ENCODE measurements at regions of chr2 and their contacts with region 1.

Region 1: GRCh38 chr2:167147271-167147941 is 259.1 kb downstream of the XIRP2 start:
- DNase-seq: no peak
- ATAC-seq: no peak
- H3K4me3 ChIP-seq: no peak overlapping the region
- H3K27ac ChIP-seq: peak overlapping the region; percentile 32
- H3K4me1 ChIP-seq: peaks cover 19% of the 10 kb centered on the region
- H3K27me3 ChIP-seq: no peaks in the 10 kb centered on the region
- CTCF ChIP-seq: no peak

Region 2: GRCh38 chr2:166984797-166985196 is 162.6 kb before region 1 on chr2:
- intact Hi-C with region 1: no loop called
- DNase-seq: no peak
- ATAC-seq: no peak
- H3K4me3 ChIP-seq: no peak overlapping the region
- H3K27ac ChIP-seq: no peak overlapping the region
- H3K4me1 ChIP-seq: no peaks in the 10 kb centered on the region
- H3K27me3 ChIP-seq: no peaks in the 10 kb centered on the region
- CTCF ChIP-seq: no peak

Region 3: DNA sequence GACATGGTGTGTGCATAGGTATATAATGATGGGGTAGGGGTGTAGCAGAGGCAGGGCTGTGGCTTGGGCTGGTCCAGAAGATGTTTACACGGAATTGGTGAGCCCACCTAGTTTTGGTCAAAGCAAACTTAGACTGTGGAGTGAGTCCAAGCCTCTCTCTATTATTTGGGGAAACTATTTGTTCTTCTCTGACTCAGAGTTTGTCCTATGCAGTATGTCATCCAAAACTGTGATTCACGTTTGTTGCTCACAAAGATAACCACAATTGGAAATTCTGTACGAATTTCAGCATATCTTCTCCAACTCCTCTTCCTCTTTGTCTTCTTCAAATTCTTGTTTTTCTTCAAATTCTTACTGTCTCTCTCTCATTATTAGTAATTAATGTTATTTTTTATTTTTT is 33.7 kb after region 1 on chr2:
- intact Hi-C with region 1: loop called in 1 of 2 experiments (anchors 5 kb)
- DNase-seq: no peak
- ATAC-seq: peak in 2 of 4 donors; percentile 30 to 35
- H3K4me3 ChIP-seq: no peak overlapping the region
- H3K27ac ChIP-seq: no peak overlapping the region
- H3K4me1 ChIP-seq: peaks cover 3% of the 10 kb centered on the region
- H3K27me3 ChIP-seq: no peaks in the 10 kb centered on the region
- CTCF ChIP-seq: no peak

Region 4: GRCh38 chr2:167187978-167188967 is 40.9 kb after region 1 on chr2:
- intact Hi-C with region 1: loop called (anchors 2 to 5 kb)
- DNase-seq: no peak
- ATAC-seq: peak; percentile 31 to 62 (median 51)
- H3K4me3 ChIP-seq: peak overlapping the region; percentile 74
- H3K27ac ChIP-seq: peak overlapping the region; percentile 96
- H3K4me1 ChIP-seq: peaks cover 9% of the 10 kb centered on the region
- H3K27me3 ChIP-seq: no peaks in the 10 kb centered on the region
- CTCF ChIP-seq: no peak

Measured in psoas muscle (tissue), 8 donors.